ENCODE measurements at regions of chr19 and their contacts with region 1.

Region 1: DNA sequence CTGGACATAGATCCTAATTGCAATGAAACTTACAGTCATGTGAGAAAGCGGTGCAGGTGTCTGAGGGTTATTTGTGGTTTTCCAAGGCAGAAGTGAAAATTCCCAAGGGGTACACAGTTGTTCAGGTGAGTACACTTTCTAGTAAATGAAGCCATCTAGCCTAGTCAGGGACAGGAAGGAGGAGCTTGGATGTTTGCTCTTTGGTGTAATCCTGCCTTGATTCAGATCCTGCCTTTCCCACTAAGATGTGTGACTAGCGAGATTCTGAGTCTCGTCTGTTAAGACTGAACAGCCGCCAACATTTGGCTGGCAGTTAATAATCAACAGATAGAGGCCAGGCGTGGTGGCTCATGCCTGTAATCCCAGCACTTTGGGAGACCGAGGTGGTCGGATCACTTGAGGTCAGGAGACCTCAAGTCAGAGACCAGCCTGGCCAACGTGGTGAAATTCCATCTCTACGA is 2.5 kb downstream of the RPS9 start:
- DNase-seq: no peak
- ATAC-seq: no peak
- H3K4me3 Mint-ChIP-seq: peak overlapping the region; percentile 100
- H3K27ac Mint-ChIP-seq: peak overlapping the region; percentile 54
- H3K4me1 Mint-ChIP-seq: peaks cover 59% of the 10 kb centered on the region
- H3K27me3 Mint-ChIP-seq: no peaks in the 10 kb centered on the region

Region 2: GRCh38 chr19:54159352-54160181 is 43.6 kb before region 1 on chr19 and contains the start of gene LENG1:
- POLR2A ChIA-PET with region 1: interaction called, 17 read pairs
- DNase-seq: peak; percentile 91
- ATAC-seq: peak; percentile 86
- H3K4me3 Mint-ChIP-seq: peak within 1 kb of the TSS; percentile 97
- H3K27ac Mint-ChIP-seq: peak within 1 kb of the TSS; percentile 99
- H3K4me1 Mint-ChIP-seq: peaks cover 39% of the 10 kb centered on the region
- H3K27me3 Mint-ChIP-seq: no peaks in the 10 kb centered on the region
- total RNA-seq, gene LENG1: 10.2 to 12.8 TPM

Region 3: DNA sequence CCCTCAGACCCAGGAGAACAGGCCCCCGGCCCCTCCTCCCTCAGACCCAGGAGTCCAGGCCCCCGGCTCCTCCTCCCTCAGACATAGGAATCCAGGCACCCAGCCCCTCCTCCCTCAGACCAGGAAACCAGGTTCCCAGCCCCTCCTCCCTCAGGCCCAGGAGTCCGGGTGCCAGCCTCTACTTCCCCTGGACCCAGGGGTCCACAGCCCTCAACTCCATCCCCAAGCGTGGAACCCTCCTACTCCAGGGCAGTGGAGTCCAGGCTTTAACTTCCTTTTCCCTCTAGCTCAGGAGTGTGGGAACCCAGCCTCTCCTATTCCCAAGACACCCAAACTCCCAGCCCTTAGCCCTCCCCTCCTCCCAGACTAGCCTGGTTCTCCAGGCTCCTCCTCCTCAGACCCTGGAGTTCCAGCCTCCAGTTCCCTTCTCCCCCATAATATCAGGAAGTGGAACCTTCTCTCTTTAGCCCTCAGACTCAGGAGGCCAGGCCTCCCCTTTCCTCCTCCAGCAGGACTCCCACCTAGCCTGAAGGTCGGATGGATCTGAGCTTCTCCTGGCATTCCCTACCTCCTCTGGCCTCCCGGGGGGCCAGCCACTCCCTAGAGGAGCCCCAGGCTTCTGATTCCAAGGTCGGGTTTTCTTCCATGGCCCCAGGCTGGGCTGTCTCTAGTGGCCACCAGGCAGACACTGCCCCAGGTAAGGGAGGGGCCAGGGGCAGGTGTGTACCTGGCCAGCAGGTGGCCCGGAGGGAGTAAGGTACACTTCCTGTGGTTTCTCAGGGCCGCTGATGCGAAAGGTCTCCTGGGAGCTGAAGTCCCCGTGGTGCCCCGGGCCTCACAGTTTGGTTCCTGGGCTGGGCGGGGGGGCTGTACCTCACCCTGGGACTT is 30.5 kb before region 1 on chr19 and contains the start of gene TMC4:
- POLR2A ChIA-PET with region 1: no interaction called
- DNase-seq: no peak
- ATAC-seq: no peak
- H3K4me3 Mint-ChIP-seq: no peak within 1 kb of the TSS
- H3K27ac Mint-ChIP-seq: no peak within 1 kb of the TSS
- H3K4me1 Mint-ChIP-seq: no peaks in the 10 kb centered on the region
- H3K27me3 Mint-ChIP-seq: no peaks in the 10 kb centered on the region
- total RNA-seq, gene TMC4: 1.7 to 3.0 TPM